Endothelial cell of umbilical vein (primary cell): ENCODE measurements at regions of chr22 and their contacts with region 1.

Region 1: DNA sequence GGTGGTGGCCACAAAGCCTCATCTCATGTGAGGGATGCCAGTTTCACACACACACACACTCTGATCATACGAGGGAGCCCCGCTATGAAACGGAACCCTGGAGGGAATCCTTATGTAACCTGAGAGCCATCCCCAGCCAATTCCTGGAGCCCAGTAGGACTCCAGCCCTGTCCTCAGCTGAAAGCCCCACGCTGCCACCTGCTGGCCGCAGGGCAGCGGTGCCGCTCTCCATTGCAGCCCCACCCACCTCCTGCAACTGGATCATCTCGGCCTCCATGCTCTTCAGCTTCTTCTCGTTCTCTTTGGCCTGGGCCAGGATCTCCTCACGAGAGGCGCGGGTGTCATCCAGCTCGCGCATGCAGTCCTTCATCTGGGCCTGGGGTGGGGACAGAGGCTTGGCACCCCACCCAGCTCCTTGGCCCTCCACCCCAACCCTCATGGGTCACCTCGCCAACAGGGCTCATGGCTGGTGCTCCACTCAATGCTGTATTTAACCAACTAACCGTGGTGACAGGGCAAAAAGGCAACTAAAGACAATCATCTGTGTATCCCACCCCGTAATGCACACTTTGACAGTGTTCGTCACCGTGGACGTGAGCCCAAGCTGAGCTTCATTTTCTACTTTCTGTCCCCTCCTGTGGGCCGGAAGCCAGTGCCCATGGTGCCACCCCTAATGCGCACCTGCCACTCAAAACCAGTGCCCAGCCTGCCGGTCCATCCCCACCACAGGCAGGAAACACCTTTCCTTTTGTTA is 33.7 kb downstream of the APOL1 start:
- DNase-seq: peak; percentile 68
- H3K4me3 ChIP-seq: no peak overlapping the region
- H3K27ac ChIP-seq: no peak overlapping the region
- H3K4me1 ChIP-seq: no peaks in the 10 kb centered on the region
- H3K27me3 ChIP-seq: no peaks in the 10 kb centered on the region
- CTCF ChIP-seq: peak; percentile 95 to 96
- POLR2A ChIP-seq: peak; percentile 41

Region 2: GRCh38 chr22:36301384-36301828 is 14.8 kb after region 1 on chr22:
- CTCF ChIA-PET with region 1: interaction called, 12 read pairs
- POLR2A ChIA-PET with region 1: no interaction called
- dilution Hi-C with region 1: no loop called
- intact Hi-C with region 1: no loop called
- DNase-seq: peak; percentile 60
- H3K4me3 ChIP-seq: no peak overlapping the region
- H3K27ac ChIP-seq: no peak overlapping the region
- H3K4me1 ChIP-seq: peaks cover 10% of the 10 kb centered on the region
- H3K27me3 ChIP-seq: no peaks in the 10 kb centered on the region
- CTCF ChIP-seq: peak; percentile 88
- POLR2A ChIP-seq: no peak